Activated T-helper 2 cell treated with anti-CD3 and anti-CD28 coated beads, Interferon-gamma antibody, Interleukin-2, Interleukin-4, amounts not matched to agents 10 μg/mL and 5 μg/mL and 100 μg/mL, durations not matched to agents 14 hours and 24 hours and 36 hours (primary cell): ENCODE measurements at regions of chr3 and their contacts with region 1.

Region 1: GRCh38 chr3:153161138-153161713 is 800 bp upstream of the RAP2B start:
- DNase-seq: peak; percentile 93
- H3K4me3 Mint-ChIP-seq: peak overlapping the region; percentile 94
- H3K27ac Mint-ChIP-seq: peak overlapping the region; percentile 97
- H3K4me1 Mint-ChIP-seq: peaks cover 31% of the 10 kb centered on the region
- H3K27me3 Mint-ChIP-seq: no peaks in the 10 kb centered on the region

Region 2: GRCh38 chr3:152825566-152825965 is 335.7 kb before region 1 on chr3:
- intact Hi-C with region 1: no loop called
- DNase-seq: no peak
- H3K4me3 Mint-ChIP-seq: no peak overlapping the region
- H3K27ac Mint-ChIP-seq: no peak overlapping the region
- H3K4me1 Mint-ChIP-seq: no peaks in the 10 kb centered on the region
- H3K27me3 Mint-ChIP-seq: peaks cover 8% of the 10 kb centered on the region

Region 3: DNA sequence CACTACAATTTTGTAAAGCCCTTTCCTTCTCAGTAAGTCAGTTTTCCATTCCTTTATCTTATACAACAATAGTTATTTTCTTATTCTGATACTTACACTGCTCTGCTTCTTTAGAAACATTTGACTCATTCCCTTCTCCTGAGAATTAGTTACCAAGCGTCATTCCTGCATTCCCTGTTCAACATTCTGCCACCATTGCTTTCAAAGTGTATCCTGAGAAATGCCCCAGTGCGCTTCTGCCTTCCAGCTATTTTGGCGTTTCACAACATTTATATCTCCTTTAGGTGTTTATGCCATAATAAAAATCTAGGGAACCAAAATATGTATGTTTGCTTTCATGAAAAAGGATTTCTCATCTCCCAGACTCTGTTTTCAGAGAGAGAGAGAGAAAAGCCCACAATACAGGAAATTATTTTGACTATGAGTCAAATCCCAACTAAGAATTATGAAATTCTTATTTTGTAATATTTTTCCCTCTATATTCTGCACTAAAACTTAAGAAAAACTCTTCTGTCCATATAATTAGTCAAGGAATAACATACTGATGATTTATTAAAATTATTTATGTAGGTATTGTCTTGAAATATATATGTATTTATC is 117.4 kb before region 1 on chr3:
- intact Hi-C with region 1: loop called (anchors 2 kb)
- DNase-seq: no peak
- H3K4me3 Mint-ChIP-seq: no peak overlapping the region
- H3K27ac Mint-ChIP-seq: no peak overlapping the region
- H3K4me1 Mint-ChIP-seq: peaks cover 5% of the 10 kb centered on the region
- H3K27me3 Mint-ChIP-seq: peaks cover 4% of the 10 kb centered on the region

Region 4: DNA sequence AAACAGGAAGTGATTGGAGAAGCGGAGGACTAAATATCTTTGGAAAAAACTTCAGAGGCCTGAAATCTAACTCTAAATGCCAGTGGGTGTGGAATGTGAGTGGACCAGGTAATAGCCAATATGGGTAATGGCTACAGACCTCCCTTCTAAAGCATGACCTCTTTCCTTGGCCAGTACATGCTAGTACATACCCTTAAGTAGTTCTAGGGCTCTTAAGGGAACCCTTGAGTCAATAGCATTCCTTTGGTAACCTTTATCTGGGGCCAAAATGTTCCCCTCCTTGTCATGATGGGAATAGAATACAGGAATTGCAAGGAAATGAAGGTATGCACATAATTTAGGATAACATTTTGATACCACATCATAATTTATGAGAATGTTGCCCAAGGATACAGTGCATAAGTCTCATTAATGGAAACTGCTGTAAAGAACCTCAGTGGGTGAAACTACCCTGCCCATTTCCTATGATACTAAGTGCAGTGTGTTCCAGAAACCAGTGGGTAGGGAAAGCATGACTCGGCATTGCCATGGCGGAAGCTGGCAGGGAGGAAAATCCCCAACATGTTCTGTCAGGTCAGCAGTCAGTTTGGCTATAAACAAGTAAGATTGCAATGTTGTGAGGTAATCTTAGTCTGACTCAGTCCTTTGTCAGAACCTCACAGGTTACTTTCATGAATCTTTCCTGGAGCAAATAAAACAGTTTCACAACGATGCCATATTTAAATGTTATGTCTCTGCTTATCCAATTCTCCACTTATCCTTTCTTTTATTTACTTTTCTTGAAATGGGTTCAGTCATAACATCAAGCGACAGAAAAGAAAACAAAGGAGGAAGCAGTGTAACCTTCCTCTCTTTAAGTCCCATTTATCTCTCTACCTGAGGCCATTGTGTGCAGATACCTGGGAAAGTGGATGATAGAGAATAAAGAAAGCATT is 22.7 kb before region 1 on chr3:
- intact Hi-C with region 1: loop called (anchors 1 kb)
- DNase-seq: peak; percentile 34
- H3K4me3 Mint-ChIP-seq: no peak overlapping the region
- H3K27ac Mint-ChIP-seq: peak overlapping the region; percentile 72
- H3K4me1 Mint-ChIP-seq: peaks cover 17% of the 10 kb centered on the region
- H3K27me3 Mint-ChIP-seq: no peaks in the 10 kb centered on the region

Region 5: DNA sequence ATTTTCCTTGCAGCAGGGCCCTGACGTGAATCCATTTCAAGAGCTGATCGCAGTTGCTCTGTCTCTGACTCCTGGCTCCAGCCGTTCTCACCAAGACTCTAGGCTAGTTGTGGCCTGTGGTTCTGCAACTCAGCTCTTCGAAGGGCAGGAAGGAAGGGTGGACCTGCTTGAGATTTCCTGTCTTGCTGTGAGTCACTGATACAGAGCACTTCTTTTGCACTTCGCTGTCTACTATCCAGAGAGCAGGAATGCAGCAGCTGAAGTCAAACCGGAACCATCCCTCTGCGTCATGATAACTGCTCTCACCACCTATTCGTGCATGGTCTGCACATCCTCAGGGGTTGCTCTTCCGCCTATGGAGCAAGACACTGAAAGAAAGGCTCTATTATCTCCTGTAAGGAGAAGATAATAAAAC is 60.5 kb after region 1 on chr3:
- intact Hi-C with region 1: loop called (anchors 1 kb)
- DNase-seq: peak; percentile 78
- H3K4me3 Mint-ChIP-seq: peak overlapping the region; percentile 38
- H3K27ac Mint-ChIP-seq: peak overlapping the region; percentile 85
- H3K4me1 Mint-ChIP-seq: peaks cover 46% of the 10 kb centered on the region
- H3K27me3 Mint-ChIP-seq: no peaks in the 10 kb centered on the region

Region 6: DNA sequence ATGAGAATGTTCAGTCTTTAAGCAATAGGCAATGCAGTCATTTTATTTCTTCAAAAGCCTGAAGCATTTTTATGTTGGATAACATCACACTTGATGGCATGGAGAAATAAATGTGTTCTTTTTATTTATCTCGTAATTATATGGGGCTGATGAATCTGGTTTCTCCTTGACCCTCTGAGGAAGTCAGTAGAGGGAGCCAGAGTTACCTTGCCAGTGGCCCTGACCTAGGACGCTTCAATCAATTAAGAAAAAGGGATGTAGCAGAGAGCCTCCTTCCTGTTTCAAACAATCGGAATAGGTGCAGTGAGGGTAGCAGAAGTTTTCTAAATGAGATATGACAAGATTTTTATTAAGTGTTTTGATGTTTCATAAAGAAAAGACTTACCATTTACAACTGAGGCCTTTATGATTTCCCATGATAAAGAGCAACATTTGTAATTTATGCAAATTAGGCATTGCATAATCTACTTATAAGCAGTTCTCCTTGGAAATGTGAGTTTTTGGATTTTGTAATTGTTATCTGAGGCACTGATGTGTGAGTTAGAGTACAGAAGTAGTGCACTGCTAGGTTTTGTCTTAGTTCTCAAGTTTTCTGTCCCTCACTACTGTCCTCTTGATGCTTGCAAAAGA is 129.9 kb after region 1 on chr3:
- intact Hi-C with region 1: loop called (anchors 2 kb)
- DNase-seq: no peak
- H3K4me3 Mint-ChIP-seq: no peak overlapping the region
- H3K27ac Mint-ChIP-seq: no peak overlapping the region
- H3K4me1 Mint-ChIP-seq: peaks cover 21% of the 10 kb centered on the region
- H3K27me3 Mint-ChIP-seq: no peaks in the 10 kb centered on the region